T-cell (primary cell): ENCODE measurements at regions of chr12 and their contacts with region 1.

Region 1: DNA sequence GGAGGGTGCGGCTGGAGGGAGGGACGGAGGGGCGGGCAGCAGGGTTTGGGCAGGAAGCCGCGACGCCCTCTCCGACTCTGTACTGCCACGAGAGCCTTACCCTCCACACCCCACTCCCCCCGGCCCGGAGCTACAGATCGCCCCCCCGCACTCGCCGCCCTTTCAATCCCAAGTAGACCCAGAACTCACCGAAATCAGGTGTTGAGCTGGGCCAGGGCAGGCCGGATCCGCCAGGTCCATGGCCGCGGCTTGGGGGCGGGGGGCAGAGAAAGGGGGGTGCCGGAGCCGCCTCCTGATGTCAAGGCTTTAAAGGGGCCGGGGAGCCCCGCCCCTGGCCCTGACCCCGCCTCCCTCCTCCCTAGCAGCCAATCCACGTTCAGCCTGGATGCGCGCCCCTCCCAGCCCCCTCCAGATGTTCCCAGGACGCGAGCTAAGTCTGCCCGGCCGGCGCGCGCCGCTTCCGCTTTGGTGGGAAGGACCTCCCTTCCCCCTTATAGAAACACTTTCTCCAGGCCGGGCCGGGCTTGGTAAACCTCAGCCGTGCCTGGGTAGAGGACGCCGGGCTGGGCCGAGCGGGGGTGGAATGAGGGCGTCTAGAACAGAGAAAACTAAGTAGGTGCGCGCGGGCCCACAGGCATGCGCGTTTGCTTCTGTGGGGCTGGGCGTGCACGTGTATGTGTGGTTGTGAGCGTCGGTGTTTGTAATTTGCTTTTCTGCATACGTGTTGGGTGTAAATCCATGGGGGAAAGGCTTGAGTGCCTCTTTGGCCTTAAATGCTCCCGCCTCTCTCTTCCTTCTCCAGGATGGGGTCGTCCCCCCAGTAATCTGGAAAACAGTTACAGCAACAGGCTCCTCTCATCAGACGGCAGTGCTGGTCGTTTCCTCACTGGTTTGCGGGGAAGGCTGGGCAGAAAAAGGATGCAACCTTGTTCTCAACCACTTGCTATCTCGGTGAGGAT is at the start of gene NCKAP5L:
- DNase-seq: peak; percentile 83 to 96 (median 92)
- ATAC-seq: peak; percentile 95 to 97 (median 96)
- H3K4me3 ChIP-seq: peak within 1 kb of the TSS; percentile 72 to 76
- H3K4me3 Mint-ChIP-seq: peak within 1 kb of the TSS; percentile 88 to 99 (median 96)
- H3K27ac ChIP-seq: peak within 1 kb of the TSS; percentile 45
- H3K27ac Mint-ChIP-seq: peak within 1 kb of the TSS; percentile 98 to 99
- H3K4me1 ChIP-seq: peaks cover 7 to 28% of the 10 kb centered on the region in 2 experiments
- H3K4me1 Mint-ChIP-seq: peaks cover 23 to 34% (median 34%) of the 10 kb centered on the region in 3 donors
- H3K27me3 ChIP-seq: no peaks in the 10 kb centered on the region
- H3K27me3 Mint-ChIP-seq: peaks cover 0 to 3% of the 10 kb centered on the region in 2 donors
- total RNA-seq, gene NCKAP5L: 11.1 to 12.9 (median 12.6) TPM

Region 2: DNA sequence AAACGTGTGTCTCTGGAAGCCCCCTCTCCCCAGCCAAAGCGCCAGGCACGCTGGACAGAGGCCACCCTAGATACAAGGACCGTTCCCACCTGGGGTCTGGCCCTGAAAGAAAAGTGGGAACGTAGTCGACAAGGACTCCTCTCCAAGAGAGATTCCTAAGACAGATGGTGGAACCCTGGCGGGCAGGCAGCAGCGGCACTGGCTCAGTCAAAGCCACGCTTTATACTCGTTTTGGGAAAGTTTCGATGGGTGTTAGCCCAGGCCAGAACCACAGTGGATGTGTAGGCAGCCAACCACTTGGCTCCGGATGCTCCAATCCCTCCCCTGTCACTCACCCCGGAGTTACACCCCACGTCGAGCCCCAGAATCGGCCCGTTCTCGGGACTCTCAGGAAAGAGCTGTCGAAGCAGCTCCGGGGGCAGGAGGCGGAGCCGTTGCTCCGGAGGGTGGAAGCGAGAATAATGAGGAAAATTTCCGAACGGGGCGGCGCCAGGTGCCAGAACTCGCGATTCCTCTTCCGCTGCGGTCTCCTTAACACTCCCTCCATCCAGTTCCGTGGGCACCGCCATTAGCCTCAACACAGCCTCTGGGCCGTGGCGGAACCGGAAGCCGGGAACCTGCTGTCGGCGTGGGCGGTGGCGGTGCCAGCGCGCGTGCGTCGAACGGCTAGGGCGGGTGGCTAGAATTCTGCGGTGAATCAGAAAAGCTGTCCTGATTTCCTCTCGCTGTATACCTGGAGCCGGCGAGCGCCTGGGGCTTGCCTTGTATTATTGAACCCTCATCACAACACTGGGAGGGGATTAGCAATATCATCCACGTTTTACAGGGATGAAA is 14.3 kb after region 1 on chr12 and contains the start of gene BCDIN3D:
- CTCF ChIA-PET with region 1: interaction called in 1 of 2 experiments, 11 read pairs
- POLR2A ChIA-PET with region 1: interaction called in 1 of 2 experiments, 8 read pairs
- DNase-seq: peak; percentile 82 to 95 (median 89)
- ATAC-seq: peak; percentile 94 to 97 (median 96)
- H3K4me3 ChIP-seq: peak within 1 kb of the TSS; percentile 81 to 98
- H3K4me3 Mint-ChIP-seq: peak within 1 kb of the TSS; percentile 87 to 94 (median 89)
- H3K27ac ChIP-seq: peak within 1 kb of the TSS; percentile 90
- H3K27ac Mint-ChIP-seq: peak within 1 kb of the TSS; percentile 92
- H3K4me1 ChIP-seq: peaks cover 6 to 30% of the 10 kb centered on the region in 2 experiments
- H3K4me1 Mint-ChIP-seq: peaks cover 37 to 43% (median 40%) of the 10 kb centered on the region in 3 donors
- H3K27me3 ChIP-seq: no peaks in the 10 kb centered on the region
- H3K27me3 Mint-ChIP-seq: peaks cover 0 to 3% of the 10 kb centered on the region in 2 donors
- total RNA-seq, gene BCDIN3D: 4.7 to 12.8 (median 12.3) TPM

Region 3: DNA sequence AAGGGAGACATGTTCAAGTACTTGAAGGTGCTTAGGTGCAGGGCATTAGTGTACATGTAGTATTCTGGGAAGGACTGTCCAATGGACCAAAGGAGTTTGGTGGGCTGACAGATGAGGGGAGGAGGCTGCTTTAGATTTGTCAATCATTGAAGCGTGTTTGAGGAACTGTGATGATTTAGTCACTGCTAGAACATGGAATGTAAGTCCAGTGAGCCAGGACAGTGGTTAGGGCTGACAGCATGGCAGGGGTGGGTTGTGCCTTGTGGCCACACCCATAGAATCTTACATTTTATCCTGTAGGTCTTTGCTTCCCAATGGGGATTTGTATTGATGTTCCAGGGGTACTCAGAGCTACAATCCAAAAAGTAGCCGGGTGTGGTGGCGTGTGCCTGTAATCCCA is 700.9 kb after region 1 on chr12:
- CTCF ChIA-PET with region 1: no interaction called
- POLR2A ChIA-PET with region 1: no interaction called
- DNase-seq: no peak
- ATAC-seq: no peak
- H3K4me3 ChIP-seq: no peak overlapping the region
- H3K4me3 Mint-ChIP-seq: peak overlapping the region in 1 of 3 donors; percentile 47
- H3K27ac ChIP-seq: no peak overlapping the region
- H3K27ac Mint-ChIP-seq: peak overlapping the region; percentile 87 to 89
- H3K4me1 ChIP-seq: peaks cover 39 to 52% of the 10 kb centered on the region in 2 experiments
- H3K4me1 Mint-ChIP-seq: peaks cover 32 to 39% (median 39%) of the 10 kb centered on the region in 3 donors
- H3K27me3 ChIP-seq: no peaks in the 10 kb centered on the region
- H3K27me3 Mint-ChIP-seq: no peaks in the 10 kb centered on the region